Endothelial cell of umbilical vein (primary cell): ENCODE measurements at regions of chr11 and their contacts with region 1.

Region 1: GRCh38 chr11:36073411-36074203 is 129.7 kb downstream of the LDLRAD3 start:
- DNase-seq: peak; percentile 90
- H3K4me3 ChIP-seq: no peak overlapping the region
- H3K27ac ChIP-seq: peak overlapping the region; percentile 62
- H3K4me1 ChIP-seq: peaks cover 32% of the 10 kb centered on the region
- H3K27me3 ChIP-seq: no peaks in the 10 kb centered on the region
- CTCF ChIP-seq: no peak
- POLR2A ChIP-seq: no peak

Region 2: DNA sequence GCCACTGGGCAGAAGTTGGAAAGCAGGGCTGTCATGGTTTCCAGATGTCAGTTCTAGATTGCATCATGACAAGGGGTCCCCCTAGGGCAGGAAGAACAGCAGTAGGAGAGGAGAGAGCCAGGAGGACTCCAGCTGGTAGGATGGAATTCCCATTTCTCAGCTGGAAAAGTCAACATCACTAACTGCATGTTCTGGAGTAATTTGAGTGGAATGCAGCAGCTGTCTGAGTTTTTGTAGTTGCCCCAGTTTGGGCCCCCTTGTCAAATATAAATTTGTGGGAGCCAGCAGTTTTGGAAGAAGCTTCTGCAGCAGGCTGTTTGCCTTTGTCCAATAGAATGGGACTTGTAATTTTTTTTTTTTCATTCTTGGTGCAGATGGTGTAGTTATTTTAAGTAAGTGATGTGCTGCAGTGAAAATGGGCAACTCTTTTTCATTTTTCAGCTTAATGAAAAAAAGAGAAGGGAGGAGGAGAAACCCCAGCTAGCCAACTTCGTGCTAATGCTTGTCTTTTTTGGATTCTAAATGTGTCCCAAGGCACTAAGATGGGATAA is 42.8 kb before region 1 on chr11:
- CTCF ChIA-PET with region 1: no interaction called
- POLR2A ChIA-PET with region 1: no interaction called
- dilution Hi-C with region 1: no loop called
- intact Hi-C with region 1: no loop called
- DNase-seq: no peak
- H3K4me3 ChIP-seq: no peak overlapping the region
- H3K27ac ChIP-seq: no peak overlapping the region
- H3K4me1 ChIP-seq: peaks cover 9% of the 10 kb centered on the region
- H3K27me3 ChIP-seq: no peaks in the 10 kb centered on the region
- CTCF ChIP-seq: no peak
- POLR2A ChIP-seq: no peak

Region 3: GRCh38 chr11:36088266-36088972 is 14.8 kb after region 1 on chr11:
- CTCF ChIA-PET with region 1: interaction called, 14 read pairs
- POLR2A ChIA-PET with region 1: no interaction called
- dilution Hi-C with region 1: no loop called
- intact Hi-C with region 1: no loop called
- DNase-seq: peak; percentile 36
- H3K4me3 ChIP-seq: no peak overlapping the region
- H3K27ac ChIP-seq: no peak overlapping the region
- H3K4me1 ChIP-seq: peaks cover 12% of the 10 kb centered on the region
- H3K27me3 ChIP-seq: no peaks in the 10 kb centered on the region
- CTCF ChIP-seq: no peak
- POLR2A ChIP-seq: no peak

Region 4: DNA sequence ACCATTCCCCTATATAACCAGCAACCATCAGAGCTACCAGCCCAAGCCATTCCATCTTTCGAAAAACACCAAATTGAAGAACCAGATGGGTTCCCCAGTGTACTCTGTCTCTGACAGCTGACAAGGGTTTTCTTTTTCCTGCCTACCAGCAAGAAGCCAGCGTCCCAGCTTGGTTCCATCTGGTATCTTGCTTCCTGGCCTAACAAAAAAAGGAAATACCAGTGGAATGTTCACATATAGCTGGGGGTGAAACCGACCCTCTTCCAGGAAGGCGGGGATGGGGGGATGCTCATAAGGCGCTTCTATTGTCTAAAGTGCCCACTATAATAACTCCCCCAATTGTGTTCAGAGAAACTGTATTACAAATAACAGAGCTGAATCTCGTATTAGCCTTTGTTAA is 42.6 kb after region 1 on chr11:
- CTCF ChIA-PET with region 1: no interaction called
- POLR2A ChIA-PET with region 1: no interaction called
- dilution Hi-C with region 1: no loop called
- intact Hi-C with region 1: loop called (anchors 1 kb)
- DNase-seq: peak; percentile 88
- H3K4me3 ChIP-seq: no peak overlapping the region
- H3K27ac ChIP-seq: peak overlapping the region; percentile 76
- H3K4me1 ChIP-seq: peaks cover 26% of the 10 kb centered on the region
- H3K27me3 ChIP-seq: no peaks in the 10 kb centered on the region
- CTCF ChIP-seq: no peak
- POLR2A ChIP-seq: no peak

Region 5: GRCh38 chr11:36149538-36150242 is 76.1 kb after region 1 on chr11:
- CTCF ChIA-PET with region 1: interaction called, 3 read pairs
- POLR2A ChIA-PET with region 1: no interaction called
- dilution Hi-C with region 1: no loop called
- intact Hi-C with region 1: loop called (anchors 1 kb)
- DNase-seq: peak; percentile 99
- H3K4me3 ChIP-seq: no peak overlapping the region
- H3K27ac ChIP-seq: peak overlapping the region; percentile 93
- H3K4me1 ChIP-seq: peaks cover 25% of the 10 kb centered on the region
- H3K27me3 ChIP-seq: no peaks in the 10 kb centered on the region
- CTCF ChIP-seq: peak; percentile 43 to 50
- POLR2A ChIP-seq: peak; percentile 64

Region 6: GRCh38 chr11:36156161-36156816 is 82.7 kb after region 1 on chr11:
- CTCF ChIA-PET with region 1: interaction called, 10 read pairs
- POLR2A ChIA-PET with region 1: no interaction called
- dilution Hi-C with region 1: no loop called
- intact Hi-C with region 1: no loop called
- DNase-seq: peak; percentile 70
- H3K4me3 ChIP-seq: no peak overlapping the region
- H3K27ac ChIP-seq: peak overlapping the region; percentile 75
- H3K4me1 ChIP-seq: peaks cover 28% of the 10 kb centered on the region
- H3K27me3 ChIP-seq: no peaks in the 10 kb centered on the region
- CTCF ChIP-seq: no peak
- POLR2A ChIP-seq: no peak

Region 7: DNA sequence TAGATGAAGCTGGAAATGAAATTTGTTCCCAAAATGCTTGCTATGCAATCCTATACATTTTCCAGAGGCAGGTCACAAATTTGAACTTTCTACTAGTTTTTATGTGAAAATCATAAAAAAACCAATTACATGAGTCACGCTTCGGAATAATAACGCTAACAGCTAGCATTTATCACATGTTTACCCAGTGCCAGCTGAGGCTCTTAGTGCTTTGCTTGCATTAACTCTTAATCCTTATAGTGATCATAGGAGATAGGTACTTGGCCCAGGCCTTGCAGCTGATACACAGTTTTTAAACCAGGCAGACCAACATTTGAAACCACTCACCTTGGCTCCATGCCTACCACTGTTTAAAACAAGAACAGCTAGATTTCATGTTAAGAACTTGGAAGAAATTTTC is 656.2 kb after region 1 on chr11:
- CTCF ChIA-PET with region 1: no interaction called
- POLR2A ChIA-PET with region 1: no interaction called
- dilution Hi-C with region 1: no loop called
- intact Hi-C with region 1: no loop called
- DNase-seq: no peak
- H3K4me3 ChIP-seq: no peak overlapping the region
- H3K27ac ChIP-seq: no peak overlapping the region
- H3K4me1 ChIP-seq: no peaks in the 10 kb centered on the region
- H3K27me3 ChIP-seq: no peaks in the 10 kb centered on the region
- CTCF ChIP-seq: no peak
- POLR2A ChIP-seq: no peak